Left cardiac atrium (tissue), 4 donors: ENCODE measurements at regions of chr1 and their contacts with region 1.

Region 1: GRCh38 chr1:244047621-244048471 is 3.2 kb upstream of the ZBTB18 start:
- DNase-seq: peak; percentile 99
- ATAC-seq: peak; percentile 96 to 97

Region 2: DNA sequence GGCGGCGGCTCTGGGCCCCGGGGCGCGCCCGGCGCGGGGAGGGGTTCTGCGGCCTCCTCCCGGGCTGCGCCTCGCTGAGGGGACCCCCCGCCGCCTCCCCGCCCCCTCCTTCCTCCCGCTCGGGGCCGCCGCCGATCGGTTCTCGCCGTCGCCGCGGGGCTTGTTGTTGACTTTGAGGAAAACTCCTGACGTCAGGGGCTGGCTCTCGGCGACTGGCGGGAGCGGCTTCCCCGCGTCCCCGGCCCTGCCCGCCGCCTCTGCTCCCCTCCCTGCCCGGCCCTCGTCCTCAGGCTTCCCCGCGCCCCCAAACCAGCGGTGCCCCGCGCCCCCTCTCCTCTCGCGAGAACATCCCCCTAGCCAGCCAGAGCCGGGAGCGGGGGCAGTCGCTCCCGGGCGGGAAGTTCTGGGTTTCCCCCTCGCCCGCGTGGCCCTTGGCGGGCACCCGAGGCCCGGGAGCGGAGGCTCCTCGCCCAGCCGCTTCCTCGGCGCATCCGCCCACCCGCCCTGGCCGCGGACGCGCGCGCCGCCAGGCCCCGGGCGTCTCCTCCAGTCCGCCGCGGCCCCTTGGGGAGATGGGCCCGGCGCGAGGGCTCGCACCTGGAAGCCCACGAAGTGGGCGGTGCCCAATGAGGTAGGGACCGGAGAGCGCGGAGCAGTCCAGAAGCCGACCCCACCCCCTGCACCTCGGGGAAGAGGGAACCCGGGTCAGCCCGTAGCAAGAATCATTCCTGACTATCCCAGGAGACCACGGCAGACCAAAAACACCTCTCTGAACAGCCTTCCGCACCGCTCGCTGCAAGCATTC is 197.2 kb before region 1 on chr1:
- intact Hi-C with region 1: loop called in 1 of 2 experiments (anchors 10 kb)
- DNase-seq: peak; percentile 87
- ATAC-seq: peak; percentile 71 to 72